Activated naive CD8-positive, alpha-beta T cell treated with anti-CD3 and anti-CD28 coated beads, Interleukin-2, amount 10 ng/mL, durations not matched to agents 7 days and 5 days (primary cell): ENCODE measurements at regions of chr17 and their contacts with region 1.

Region 1: GRCh38 chr17:50372758-50373556 is at the starts of genes EME1 and MRPL27:
- DNase-seq: peak; percentile 88
- ATAC-seq: peak; percentile 88
- H3K4me3 Mint-ChIP-seq: peak within 1 kb of the TSS; percentile 98
- H3K27ac Mint-ChIP-seq: peak within 1 kb of the TSS; percentile 100
- H3K4me1 Mint-ChIP-seq: peaks cover 21% of the 10 kb centered on the region
- H3K27me3 Mint-ChIP-seq: no peaks in the 10 kb centered on the region
- total RNA-seq, gene EME1: 27.3 to 28.8 TPM
- total RNA-seq, gene MRPL27: 49.6 to 51.0 TPM

Region 2: GRCh38 chr17:50015146-50015545 is 357.8 kb before region 1 on chr17:
- POLR2A ChIA-PET with region 1: no interaction called
- DNase-seq: no peak
- ATAC-seq: no peak
- H3K4me3 Mint-ChIP-seq: no peak overlapping the region
- H3K27ac Mint-ChIP-seq: no peak overlapping the region
- H3K4me1 Mint-ChIP-seq: no peaks in the 10 kb centered on the region
- H3K27me3 Mint-ChIP-seq: peaks cover 31% of the 10 kb centered on the region

Region 3: DNA sequence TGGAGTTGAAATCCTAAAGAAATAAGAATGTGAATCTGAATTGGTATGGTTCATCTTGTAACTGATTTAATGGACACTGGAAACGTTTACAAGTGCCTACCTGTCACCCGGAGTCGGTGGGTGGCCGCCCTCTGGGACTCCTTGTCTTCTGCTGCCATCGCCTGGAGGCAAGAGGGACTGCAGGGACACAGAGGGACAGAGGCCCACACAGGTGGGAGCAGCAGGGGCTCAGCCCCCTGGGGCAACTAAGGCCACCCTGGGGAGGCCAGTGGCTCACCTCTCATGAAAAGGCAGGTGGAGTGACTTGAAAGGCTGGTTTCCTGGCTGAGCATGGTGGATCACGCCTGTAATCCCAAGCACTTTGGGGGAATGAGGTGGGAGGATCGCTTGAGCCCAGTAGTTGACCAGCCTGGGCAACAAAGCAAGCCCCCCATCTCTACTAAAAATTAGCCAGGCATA is 75.5 kb before region 1 on chr17:
- POLR2A ChIA-PET with region 1: no interaction called
- DNase-seq: peak; percentile 80
- ATAC-seq: peak; percentile 92
- H3K4me3 Mint-ChIP-seq: no peak overlapping the region
- H3K27ac Mint-ChIP-seq: no peak overlapping the region
- H3K4me1 Mint-ChIP-seq: no peaks in the 10 kb centered on the region
- H3K27me3 Mint-ChIP-seq: peaks cover 24% of the 10 kb centered on the region

Region 4: DNA sequence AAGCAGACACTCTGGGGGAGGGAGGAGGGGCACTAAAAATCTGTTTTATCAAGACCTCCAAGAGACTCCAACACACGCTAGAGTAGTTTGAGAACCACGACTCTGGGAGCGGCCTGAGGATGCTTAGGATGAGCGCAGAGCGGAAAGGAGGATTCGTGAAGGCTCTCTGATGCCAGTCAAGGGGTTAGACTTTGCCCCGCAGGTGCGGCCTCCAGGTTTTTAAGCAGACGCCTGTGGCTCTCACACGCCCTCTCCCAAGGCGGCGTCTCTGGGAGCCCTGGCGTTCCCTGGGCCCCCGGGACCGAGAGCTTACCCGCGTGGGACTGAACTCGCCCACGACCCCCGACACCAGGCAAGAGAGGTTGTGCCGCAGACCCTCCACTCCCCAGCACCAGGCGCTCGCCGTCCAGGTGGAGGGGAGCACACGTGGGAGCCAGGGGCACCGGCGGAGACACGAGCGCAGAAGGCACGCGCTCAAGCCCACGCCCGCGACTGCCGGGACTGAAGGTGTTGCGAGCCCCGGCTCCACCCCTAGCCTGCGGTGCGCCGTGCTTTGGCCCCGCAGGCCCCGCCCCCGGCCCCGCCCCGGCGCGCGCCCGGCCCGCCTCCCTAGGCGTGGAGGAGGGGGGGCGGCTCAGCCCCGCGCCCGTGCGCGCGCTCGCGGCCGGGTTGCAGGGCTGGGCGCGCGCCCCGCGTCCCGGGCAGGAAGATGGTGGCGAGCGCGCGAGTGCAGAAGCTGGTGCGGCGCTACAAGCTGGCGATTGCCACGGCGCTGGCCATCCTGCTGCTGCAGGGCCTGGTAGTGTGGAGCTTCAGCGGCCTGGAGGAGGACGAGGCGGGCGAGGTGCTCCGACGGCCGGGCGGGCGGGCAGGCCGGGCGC is 27.3 kb before region 1 on chr17 and contains the start of gene XYLT2:
- POLR2A ChIA-PET with region 1: interaction called, 21 read pairs
- DNase-seq: peak; percentile 99
- ATAC-seq: peak; percentile 84
- H3K4me3 Mint-ChIP-seq: peak within 1 kb of the TSS; percentile 93
- H3K27ac Mint-ChIP-seq: peak within 1 kb of the TSS; percentile 93
- H3K4me1 Mint-ChIP-seq: peaks cover 25% of the 10 kb centered on the region
- H3K27me3 Mint-ChIP-seq: no peaks in the 10 kb centered on the region
- total RNA-seq, gene XYLT2: 29.0 to 31.9 TPM

Region 5: DNA sequence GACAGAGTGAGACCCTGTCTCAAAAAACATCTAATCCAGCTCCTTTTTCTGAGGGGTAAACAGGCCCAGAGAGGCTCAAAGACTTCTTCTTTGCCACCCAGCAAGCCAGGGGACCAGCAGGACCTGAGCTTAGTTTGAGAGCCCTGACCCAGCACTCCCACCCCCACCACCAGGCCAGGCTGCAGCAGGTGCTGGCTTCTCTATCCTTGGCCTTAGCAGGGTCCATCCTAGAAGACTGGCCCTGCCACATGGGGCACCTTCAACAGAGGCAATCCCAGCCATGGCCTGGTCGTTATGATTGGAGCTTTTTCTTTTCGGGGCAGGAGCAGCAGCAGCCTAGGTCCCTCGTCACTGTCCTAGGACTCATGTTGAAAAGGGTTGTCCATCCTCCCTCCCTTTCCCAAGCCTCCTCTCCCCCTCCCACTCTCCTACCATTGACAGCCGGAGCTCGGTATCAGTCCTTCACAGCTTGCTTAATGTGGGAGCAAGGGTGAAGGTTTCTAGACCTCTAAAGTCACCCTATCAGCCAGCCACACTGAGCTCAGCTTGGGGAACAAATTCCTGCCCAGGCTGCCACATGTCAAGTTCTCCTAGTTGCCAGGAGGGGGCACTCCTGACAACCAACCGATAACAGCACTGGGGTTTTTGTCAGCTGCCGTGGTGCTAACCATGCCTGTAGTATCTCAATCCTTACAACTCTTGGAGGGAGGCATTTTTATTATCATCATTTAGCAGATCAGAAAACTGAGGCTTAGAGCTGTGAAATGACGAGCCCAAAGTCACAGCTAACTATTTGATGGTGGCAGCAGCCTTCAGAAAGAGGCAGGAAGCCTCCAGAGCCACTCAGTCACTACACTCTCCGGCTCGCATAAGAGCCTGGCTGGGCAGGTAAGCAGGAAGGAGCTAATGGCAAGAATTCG is 11.1 kb before region 1 on chr17:
- POLR2A ChIA-PET with region 1: interaction called, 35 read pairs
- DNase-seq: no peak
- ATAC-seq: peak; percentile 79
- H3K4me3 Mint-ChIP-seq: peak overlapping the region; percentile 2
- H3K27ac Mint-ChIP-seq: peak overlapping the region; percentile 70
- H3K4me1 Mint-ChIP-seq: peaks cover 14% of the 10 kb centered on the region
- H3K27me3 Mint-ChIP-seq: no peaks in the 10 kb centered on the region

Region 6: GRCh38 chr17:50406578-50406977 is 33.6 kb after region 1 on chr17:
- POLR2A ChIA-PET with region 1: no interaction called
- DNase-seq: no peak
- ATAC-seq: no peak
- H3K4me3 Mint-ChIP-seq: no peak overlapping the region
- H3K27ac Mint-ChIP-seq: no peak overlapping the region
- H3K4me1 Mint-ChIP-seq: no peaks in the 10 kb centered on the region
- H3K27me3 Mint-ChIP-seq: peaks cover 24% of the 10 kb centered on the region

Region 7: DNA sequence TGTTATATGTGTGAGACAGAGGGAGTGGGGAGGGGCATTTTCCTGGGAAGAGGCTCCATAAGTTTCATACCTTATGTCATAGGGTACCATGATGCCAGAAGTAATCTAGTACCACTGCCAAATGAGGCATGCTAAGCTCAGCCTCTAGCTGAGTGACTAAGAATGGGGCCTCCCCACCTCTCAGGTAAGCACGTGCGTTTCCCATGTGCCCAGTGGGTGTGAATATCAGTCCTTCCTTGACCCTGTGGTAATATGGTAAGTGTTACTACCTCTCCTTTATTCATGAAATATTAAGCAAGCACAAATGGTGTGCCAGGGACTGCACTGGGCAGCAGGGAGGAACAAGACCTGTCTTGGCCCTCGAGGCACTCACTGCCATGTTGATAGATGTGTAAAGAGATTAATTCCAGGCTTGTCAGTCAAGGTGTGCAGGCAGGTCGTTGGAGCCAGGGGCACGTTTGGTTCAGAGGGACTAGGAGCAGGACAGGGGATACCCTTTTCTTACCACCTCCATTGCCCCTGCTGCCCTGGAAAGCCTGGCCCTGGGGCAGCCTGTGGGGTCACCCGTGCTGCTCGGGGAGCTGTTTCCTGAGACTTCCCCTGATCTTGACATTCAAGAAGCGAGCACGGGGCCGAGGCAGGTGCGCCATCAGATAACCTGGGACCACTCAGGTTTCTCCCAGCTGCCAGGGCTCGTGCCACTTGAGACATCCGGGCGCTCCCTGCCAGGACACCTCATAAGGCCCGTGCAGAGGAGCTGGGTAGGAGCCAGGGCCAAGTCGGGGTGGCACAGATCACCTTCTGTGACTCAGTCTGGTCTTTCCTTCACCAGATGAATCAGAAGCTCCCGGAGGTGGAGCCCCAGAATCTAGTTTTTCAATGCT is 114.5 kb after region 1 on chr17:
- POLR2A ChIA-PET with region 1: no interaction called
- DNase-seq: no peak
- ATAC-seq: no peak
- H3K4me3 Mint-ChIP-seq: no peak overlapping the region
- H3K27ac Mint-ChIP-seq: no peak overlapping the region
- H3K4me1 Mint-ChIP-seq: peaks cover 1% of the 10 kb centered on the region
- H3K27me3 Mint-ChIP-seq: no peaks in the 10 kb centered on the region